CD8-positive, alpha-beta T cell (primary cell): ENCODE measurements at regions of chr12 and their contacts with region 1.

Region 1: GRCh38 chr12:54359033-54359761 is 5.1 kb downstream of the GPR84 start:
- DNase-seq: peak; percentile 83 to 99 (median 91)
- ATAC-seq: peak; percentile 91
- H3K4me3 ChIP-seq: peak overlapping the region; percentile 77 to 97
- H3K4me3 Mint-ChIP-seq: no peak overlapping the region
- H3K27ac ChIP-seq: peak overlapping the region; percentile 60 to 84
- H3K27ac Mint-ChIP-seq: no peak overlapping the region
- H3K4me1 ChIP-seq: peaks cover 23% of the 10 kb centered on the region
- H3K4me1 Mint-ChIP-seq: peaks cover 16% of the 10 kb centered on the region
- H3K27me3 ChIP-seq: no peaks in the 10 kb centered on the region
- H3K27me3 Mint-ChIP-seq: no peaks in the 10 kb centered on the region
- CTCF ChIP-seq: no peak

Region 2: DNA sequence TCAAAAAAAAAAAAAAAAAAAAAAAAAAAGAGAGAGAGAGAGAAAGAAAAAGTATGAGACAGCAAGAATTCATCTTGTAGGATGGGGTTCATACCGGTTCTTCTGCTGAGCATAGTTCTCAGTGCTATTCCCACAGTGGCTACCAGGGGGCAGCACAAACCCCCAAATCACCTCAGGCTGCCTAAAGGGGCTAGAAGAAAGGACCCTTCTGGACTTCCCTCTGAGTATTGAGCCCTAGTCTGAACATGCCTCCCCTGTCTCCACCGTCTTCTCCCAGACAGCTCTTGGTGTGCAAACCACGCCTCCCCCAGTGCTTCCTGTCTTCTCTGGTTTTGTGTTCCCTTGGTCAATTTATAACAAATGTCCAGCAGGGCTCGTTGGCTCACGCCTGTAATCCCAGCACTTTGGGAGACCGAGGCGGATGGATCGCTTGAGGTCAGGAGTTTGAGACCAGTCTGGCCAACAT is 139.1 kb before region 1 on chr12:
- CTCF ChIA-PET with region 1: interaction called, 21 read pairs
- POLR2A ChIA-PET with region 1: no interaction called
- intact Hi-C with region 1: loop called in 1 of 2 experiments (anchors 1 kb)
- DNase-seq: peak; percentile 39 to 76 (median 62)
- ATAC-seq: peak; percentile 62
- H3K4me3 ChIP-seq: no peak overlapping the region
- H3K4me3 Mint-ChIP-seq: no peak overlapping the region
- H3K27ac ChIP-seq: no peak overlapping the region
- H3K27ac Mint-ChIP-seq: no peak overlapping the region
- H3K4me1 ChIP-seq: peaks cover 22% of the 10 kb centered on the region
- H3K4me1 Mint-ChIP-seq: peaks cover 26% of the 10 kb centered on the region
- H3K27me3 ChIP-seq: no peaks in the 10 kb centered on the region
- H3K27me3 Mint-ChIP-seq: peaks cover 8% of the 10 kb centered on the region
- CTCF ChIP-seq: peak; percentile 62

Region 3: DNA sequence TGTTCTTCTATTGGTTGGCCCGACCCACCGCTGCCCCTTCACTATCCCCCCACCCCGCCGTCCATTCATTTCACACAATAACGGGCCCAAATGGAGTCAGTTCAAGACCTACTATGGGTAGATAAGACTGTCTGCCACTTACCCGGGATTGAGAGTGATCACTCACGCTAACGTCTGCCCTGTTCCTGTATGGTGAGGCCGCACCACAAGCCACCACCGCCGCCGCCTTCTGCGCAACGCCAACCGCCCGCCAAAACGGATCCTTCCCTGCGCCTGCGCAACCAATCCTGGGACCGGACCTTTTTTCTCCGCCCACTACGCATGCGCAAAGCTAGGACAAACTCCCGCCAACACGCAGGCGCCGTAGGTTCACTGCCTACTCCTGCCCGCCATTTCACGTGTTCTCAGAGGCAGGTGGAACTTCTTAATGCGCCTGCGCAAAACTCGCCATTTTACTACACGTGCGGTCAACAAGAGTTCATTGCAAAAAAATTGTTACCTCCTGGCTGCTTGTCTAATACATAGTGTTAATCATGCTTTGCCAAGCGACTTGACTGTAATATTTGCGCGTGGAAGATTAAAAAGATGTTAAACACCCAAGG is 79.2 kb before region 1 on chr12 and contains the start of gene CBX5:
- CTCF ChIA-PET with region 1: interaction called, 4 read pairs
- POLR2A ChIA-PET with region 1: interaction called, 33 read pairs
- intact Hi-C with region 1: loop called (anchors 1 kb)
- DNase-seq: peak; percentile 99 to 100 (median 100)
- ATAC-seq: peak; percentile 47
- H3K4me3 ChIP-seq: peak within 1 kb of the TSS; percentile 83 to 93
- H3K4me3 Mint-ChIP-seq: no peak within 1 kb of the TSS
- H3K27ac ChIP-seq: peak within 1 kb of the TSS; percentile 92 to 100
- H3K27ac Mint-ChIP-seq: no peak within 1 kb of the TSS
- H3K4me1 ChIP-seq: peaks cover 52% of the 10 kb centered on the region
- H3K4me1 Mint-ChIP-seq: peaks cover 14% of the 10 kb centered on the region
- H3K27me3 ChIP-seq: no peaks in the 10 kb centered on the region
- H3K27me3 Mint-ChIP-seq: no peaks in the 10 kb centered on the region
- CTCF ChIP-seq: no peak
- total RNA-seq, gene CBX5: 26.1 to 26.7 TPM

Region 4: GRCh38 chr12:54324617-54325441 is 34.4 kb before region 1 on chr12 and contains the start of gene COPZ1:
- CTCF ChIA-PET with region 1: interaction called, 11 read pairs
- POLR2A ChIA-PET with region 1: interaction called, 16 read pairs
- intact Hi-C with region 1: loop called (anchors 1 kb)
- DNase-seq: peak; percentile 87 to 98 (median 91)
- ATAC-seq: peak; percentile 95
- H3K4me3 ChIP-seq: peak within 1 kb of the TSS; percentile 62 to 81
- H3K4me3 Mint-ChIP-seq: peak within 1 kb of the TSS; percentile 97
- H3K27ac ChIP-seq: peak within 1 kb of the TSS; percentile 79 to 82
- H3K27ac Mint-ChIP-seq: peak within 1 kb of the TSS; percentile 98
- H3K4me1 ChIP-seq: peaks cover 19% of the 10 kb centered on the region
- H3K4me1 Mint-ChIP-seq: peaks cover 36% of the 10 kb centered on the region
- H3K27me3 ChIP-seq: no peaks in the 10 kb centered on the region
- H3K27me3 Mint-ChIP-seq: no peaks in the 10 kb centered on the region
- CTCF ChIP-seq: peak; percentile 82
- total RNA-seq, gene COPZ1: 24.1 to 25.2 TPM

Region 5: GRCh38 chr12:54411391-54412241 is 52.4 kb after region 1 on chr12:
- CTCF ChIA-PET with region 1: no interaction called
- POLR2A ChIA-PET with region 1: no interaction called
- intact Hi-C with region 1: loop called in 1 of 2 experiments (anchors 1 kb)
- DNase-seq: peak in 7 of 9 experiments; percentile 36 to 74 (median 65)
- ATAC-seq: peak; percentile 39
- H3K4me3 ChIP-seq: peak overlapping the region in 1 of 2 experiments; percentile 82
- H3K4me3 Mint-ChIP-seq: peak overlapping the region; percentile 76
- H3K27ac ChIP-seq: peak overlapping the region; percentile 92 to 98
- H3K27ac Mint-ChIP-seq: peak overlapping the region; percentile 97
- H3K4me1 ChIP-seq: peaks cover 61% of the 10 kb centered on the region
- H3K4me1 Mint-ChIP-seq: peaks cover 72% of the 10 kb centered on the region
- H3K27me3 ChIP-seq: no peaks in the 10 kb centered on the region
- H3K27me3 Mint-ChIP-seq: no peaks in the 10 kb centered on the region
- CTCF ChIP-seq: no peak